ENCODE measurements at regions of chr10 and their contacts with region 1.

Region 1: DNA sequence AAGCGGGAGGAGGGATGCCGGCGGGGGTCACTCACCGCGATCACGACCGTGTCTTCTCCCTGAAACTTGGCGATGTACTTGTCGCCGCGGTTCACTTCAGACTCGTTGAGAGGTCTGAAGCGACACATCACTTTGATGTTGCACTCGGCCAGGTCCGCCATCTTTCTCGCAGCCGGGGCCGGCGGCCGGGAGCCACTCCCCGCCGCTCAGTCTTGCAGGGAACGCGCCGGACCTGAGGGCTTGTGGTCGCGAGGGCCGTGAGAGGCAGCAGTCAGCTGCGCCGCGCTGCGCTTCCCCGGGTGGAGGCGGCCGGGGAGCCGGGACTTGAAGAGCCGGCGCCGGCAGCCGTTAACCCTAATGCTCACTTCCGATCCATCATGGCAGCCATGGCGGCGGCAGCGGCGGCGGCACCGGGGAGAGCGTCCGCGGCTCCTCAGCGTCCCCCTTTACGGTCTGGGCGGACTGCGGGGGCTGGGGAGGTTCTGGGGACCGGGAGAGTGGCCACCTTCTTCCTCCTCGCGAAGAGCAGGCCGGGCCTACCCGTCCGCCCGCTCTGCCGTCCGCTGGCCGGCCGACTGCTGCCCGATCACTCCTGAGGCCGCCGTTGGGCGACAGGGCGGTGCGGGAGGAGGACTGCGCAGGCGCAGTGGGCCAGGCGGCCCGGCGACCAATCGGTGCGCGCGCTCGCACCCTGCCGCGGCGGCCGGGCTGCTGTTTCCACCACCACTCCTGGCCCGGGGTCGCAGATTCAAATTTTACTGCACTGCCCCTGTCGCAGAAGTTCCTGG is at the start of gene KIF5B:
- DNase-seq: peak; percentile 85
- H3K4me3 Mint-ChIP-seq: peak within 1 kb of the TSS; percentile 88
- H3K27ac Mint-ChIP-seq: peak within 1 kb of the TSS; percentile 90
- H3K4me1 Mint-ChIP-seq: peaks cover 36% of the 10 kb centered on the region
- H3K27me3 Mint-ChIP-seq: no peaks in the 10 kb centered on the region
- total RNA-seq, gene KIF5B: 76.6 and 79.0 TPM in 2 replicates

Region 2: DNA sequence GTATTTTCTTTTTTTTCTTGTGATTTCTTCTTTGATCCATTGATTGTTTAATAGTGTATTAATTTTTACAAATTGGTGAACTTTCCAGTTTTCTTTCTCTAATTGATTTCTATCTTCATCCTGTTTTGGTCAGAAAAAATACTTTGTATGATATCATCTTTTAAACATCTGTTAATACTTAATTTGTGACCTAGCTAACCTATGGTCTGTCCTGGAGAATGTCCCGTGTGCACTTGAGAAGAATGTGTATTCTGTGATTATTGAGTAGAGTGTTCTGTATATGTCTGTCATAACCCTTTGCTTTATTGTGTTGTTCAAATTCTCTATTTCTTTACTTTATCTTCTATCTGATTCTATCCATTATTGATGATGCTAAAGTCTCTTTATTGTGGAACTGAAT is 802.8 kb before region 1 on chr10:
- intact Hi-C with region 1: no loop called
- DNase-seq: no peak
- H3K4me3 Mint-ChIP-seq: no peak overlapping the region
- H3K27ac Mint-ChIP-seq: no peak overlapping the region
- H3K4me1 Mint-ChIP-seq: no peaks in the 10 kb centered on the region
- H3K27me3 Mint-ChIP-seq: peaks cover 35% of the 10 kb centered on the region

Region 3: GRCh38 chr10:31928549-31929260 is 127.3 kb before region 1 on chr10 and contains the start of gene ARHGAP12:
- intact Hi-C with region 1: loop called (anchors 5 kb)
- DNase-seq: peak; percentile 66
- H3K4me3 Mint-ChIP-seq: peak within 1 kb of the TSS; percentile 83
- H3K27ac Mint-ChIP-seq: peak within 1 kb of the TSS; percentile 67
- H3K4me1 Mint-ChIP-seq: peaks cover 39% of the 10 kb centered on the region
- H3K27me3 Mint-ChIP-seq: peaks cover 21% of the 10 kb centered on the region
- total RNA-seq, gene ARHGAP12: 2.7 and 3.5 TPM in 2 replicates

Region 4: GRCh38 chr10:32149252-32149955 is 93.4 kb after region 1 on chr10:
- intact Hi-C with region 1: loop called (anchors 1 kb)
- DNase-seq: peak; percentile 53
- H3K4me3 Mint-ChIP-seq: peak overlapping the region; percentile 10
- H3K27ac Mint-ChIP-seq: peak overlapping the region; percentile 94
- H3K4me1 Mint-ChIP-seq: peaks cover 48% of the 10 kb centered on the region
- H3K27me3 Mint-ChIP-seq: no peaks in the 10 kb centered on the region

Region 5: DNA sequence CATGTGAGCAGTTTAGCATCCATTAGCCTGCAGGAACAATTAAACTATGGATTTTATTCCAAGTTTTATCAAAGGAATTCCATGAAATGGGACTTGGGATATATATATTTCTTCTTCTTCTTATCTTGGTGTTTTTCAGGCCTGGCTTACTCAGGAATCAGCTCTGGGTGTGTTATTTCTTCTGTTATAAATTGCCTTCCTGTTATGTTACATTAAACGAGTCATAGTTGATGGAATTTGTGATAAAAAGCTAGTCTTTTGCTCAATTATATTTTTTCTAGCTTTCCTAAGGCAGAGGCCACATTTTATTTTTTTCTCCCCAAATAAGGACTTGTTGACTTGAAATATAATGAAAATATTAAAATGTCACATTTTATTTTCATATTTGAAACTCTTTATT is 149.7 kb after region 1 on chr10:
- intact Hi-C with region 1: loop called (anchors 2 kb)
- DNase-seq: no peak
- H3K4me3 Mint-ChIP-seq: no peak overlapping the region
- H3K27ac Mint-ChIP-seq: no peak overlapping the region
- H3K4me1 Mint-ChIP-seq: peaks cover 2% of the 10 kb centered on the region
- H3K27me3 Mint-ChIP-seq: peaks cover 6% of the 10 kb centered on the region

Region 6: GRCh38 chr10:32393911-32394310 is 337.9 kb after region 1 on chr10:
- intact Hi-C with region 1: no loop called
- DNase-seq: no peak
- H3K4me3 Mint-ChIP-seq: no peak overlapping the region
- H3K27ac Mint-ChIP-seq: no peak overlapping the region
- H3K4me1 Mint-ChIP-seq: peaks cover 1% of the 10 kb centered on the region
- H3K27me3 Mint-ChIP-seq: no peaks in the 10 kb centered on the region

Region 7: GRCh38 chr10:32445740-32446535 is 389.9 kb after region 1 on chr10 and contains the start of gene CCDC7:
- intact Hi-C with region 1: loop called (anchors 10 kb)
- DNase-seq: peak; percentile 82
- H3K4me3 Mint-ChIP-seq: peak within 1 kb of the TSS; percentile 90
- H3K27ac Mint-ChIP-seq: peak within 1 kb of the TSS; percentile 94
- H3K4me1 Mint-ChIP-seq: peaks cover 10% of the 10 kb centered on the region
- H3K27me3 Mint-ChIP-seq: peaks cover 2% of the 10 kb centered on the region
- total RNA-seq, gene CCDC7: 12.2 and 14.0 TPM in 2 replicates

Measured in activated T-helper 2 cell treated with anti-CD3 and anti-CD28 coated beads, Interferon-gamma antibody, Interleukin-2, Interleukin-4, amounts not matched to agents 10 μg/mL and 5 μg/mL and 100 μg/mL, durations not matched to agents 14 hours and 24 hours and 36 hours (primary cell).